PC-9 (cell line): ENCODE measurements at regions of chr1 and their contacts with region 1.

Region 1: DNA sequence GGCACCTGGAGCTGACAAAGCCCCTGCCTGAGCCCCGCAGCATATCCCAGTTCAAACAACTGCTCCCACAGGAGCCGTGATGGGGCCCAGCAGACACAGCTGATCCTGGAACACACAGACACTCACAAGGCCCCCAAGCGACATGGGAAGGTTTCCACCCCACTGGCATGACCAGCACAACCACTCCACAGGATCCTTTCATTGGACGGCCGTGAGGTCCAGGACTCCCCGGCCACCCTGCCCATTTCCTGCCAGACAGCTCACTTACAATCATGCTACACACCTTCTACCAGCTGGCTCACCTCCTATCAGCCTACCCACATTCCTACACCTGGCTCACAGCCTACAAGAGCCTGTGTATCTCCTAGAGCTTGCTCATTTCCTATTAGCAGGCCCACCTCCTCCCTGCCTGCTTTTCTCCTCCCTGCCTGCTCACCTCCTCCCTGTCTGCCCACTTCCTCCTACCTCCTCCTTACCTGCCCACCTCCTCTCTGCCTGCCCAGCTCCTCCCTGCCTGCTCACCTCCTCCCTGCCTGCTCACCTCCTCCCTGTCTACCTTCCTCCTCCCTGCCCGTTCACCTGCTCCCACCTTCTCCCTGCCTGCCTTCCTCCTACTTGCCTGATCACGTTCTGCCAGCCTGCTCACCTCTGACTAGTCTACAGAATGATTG is 73.9 kb downstream of the MATN1 start:
- DNase-seq: peak; percentile 61 to 81
- H3K4me3 ChIP-seq: no peak overlapping the region
- H3K27ac ChIP-seq: peak overlapping the region; percentile 33; the same call in 1 of the 2 replicates
- H3K4me1 ChIP-seq: peaks cover 31% of the 10 kb centered on the region
- H3K27me3 ChIP-seq: no peaks in the 10 kb centered on the region
- CTCF ChIP-seq: no peak

Region 2: DNA sequence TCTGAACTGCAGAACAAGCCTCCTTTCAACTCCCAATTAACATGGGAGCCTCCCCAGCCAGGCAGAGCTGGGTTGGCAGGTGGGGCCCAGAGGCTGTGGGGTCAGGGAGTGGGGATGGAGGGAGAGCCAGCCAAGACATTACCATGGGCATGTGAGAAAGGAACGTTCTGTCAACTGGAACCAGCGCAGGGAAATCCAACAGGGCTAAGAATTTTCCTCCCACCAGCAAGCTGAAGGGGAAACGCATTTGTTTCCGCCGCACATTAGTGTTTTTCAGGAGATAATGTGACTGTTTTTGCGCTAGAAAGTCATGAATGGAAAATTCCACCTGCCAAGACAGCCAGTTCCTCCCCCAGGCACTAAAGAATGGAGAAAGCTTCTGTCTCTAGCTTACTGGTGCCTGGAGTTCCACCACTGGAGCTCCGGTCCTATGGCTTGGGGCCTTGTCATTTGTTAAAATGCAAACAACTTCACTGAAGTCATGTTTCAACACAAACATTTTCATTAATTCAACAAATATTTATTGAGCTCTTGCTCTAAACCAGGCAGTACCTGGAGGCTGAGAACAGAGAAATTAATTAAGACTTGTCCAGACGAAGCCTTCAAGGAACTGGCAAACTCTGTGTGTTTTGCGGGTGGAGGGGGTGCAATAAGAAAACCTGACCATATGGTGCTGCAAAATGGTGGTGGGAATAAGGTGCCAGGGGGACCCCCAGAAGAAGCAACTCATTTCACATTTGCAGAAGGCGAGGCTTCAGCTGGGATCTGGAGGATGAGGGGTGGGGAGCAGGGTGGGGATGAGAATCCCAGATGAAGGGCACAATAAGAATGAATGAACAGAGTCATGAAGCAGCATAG is 231.1 kb before region 1 on chr1:
- CTCF ChIA-PET with region 1: no interaction called
- POLR2A ChIA-PET with region 1: interaction called, 13 read pairs
- intact Hi-C with region 1: no loop called
- DNase-seq: no peak
- H3K4me3 ChIP-seq: no peak overlapping the region
- H3K27ac ChIP-seq: no peak overlapping the region
- H3K4me1 ChIP-seq: no peaks in the 10 kb centered on the region
- H3K27me3 ChIP-seq: 0 out of 2 replicates have a peak, but pooled peaks cover 7% of the 10 kb centered on the region
- CTCF ChIP-seq: no peak

Region 3: DNA sequence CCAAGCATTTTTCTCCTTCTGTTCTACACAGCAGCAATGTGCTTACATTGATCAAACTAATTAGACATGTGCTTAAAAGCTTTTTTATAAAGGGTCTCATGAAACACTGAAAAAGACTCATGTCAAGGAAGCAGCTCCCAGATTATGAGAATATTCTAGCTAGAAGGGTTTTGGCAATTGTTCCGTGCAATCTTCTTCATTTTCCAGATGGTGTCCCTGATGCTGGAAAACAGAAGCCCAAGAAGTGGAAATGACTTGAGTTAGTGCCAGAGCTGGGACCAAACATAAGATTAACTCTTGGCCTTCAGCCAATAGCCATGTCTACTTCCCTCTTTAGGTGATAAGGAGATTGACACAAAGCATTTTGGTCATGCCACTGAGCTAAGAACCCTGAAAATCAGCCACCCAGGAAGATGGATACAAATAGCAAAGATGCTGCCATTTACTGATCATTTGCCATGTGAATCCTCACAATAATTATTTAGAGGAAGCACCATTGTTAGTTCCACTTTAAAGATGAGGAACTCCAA is 36.9 kb before region 1 on chr1:
- CTCF ChIA-PET with region 1: interaction called, 4 read pairs
- POLR2A ChIA-PET with region 1: no interaction called
- intact Hi-C with region 1: loop called (anchors 1 kb)
- DNase-seq: no peak
- H3K4me3 ChIP-seq: no peak overlapping the region
- H3K27ac ChIP-seq: no peak overlapping the region
- H3K4me1 ChIP-seq: peaks cover 21% of the 10 kb centered on the region
- H3K27me3 ChIP-seq: no peaks in the 10 kb centered on the region
- CTCF ChIP-seq: no peak

Region 4: GRCh38 chr1:30672661-30673060 is 23.2 kb after region 1 on chr1:
- CTCF ChIA-PET with region 1: no interaction called
- POLR2A ChIA-PET with region 1: no interaction called
- intact Hi-C with region 1: no loop called
- DNase-seq: no peak
- H3K4me3 ChIP-seq: no peak overlapping the region
- H3K27ac ChIP-seq: no peak overlapping the region
- H3K4me1 ChIP-seq: peaks cover 10% of the 10 kb centered on the region
- H3K27me3 ChIP-seq: no peaks in the 10 kb centered on the region
- CTCF ChIP-seq: no peak

Region 5: DNA sequence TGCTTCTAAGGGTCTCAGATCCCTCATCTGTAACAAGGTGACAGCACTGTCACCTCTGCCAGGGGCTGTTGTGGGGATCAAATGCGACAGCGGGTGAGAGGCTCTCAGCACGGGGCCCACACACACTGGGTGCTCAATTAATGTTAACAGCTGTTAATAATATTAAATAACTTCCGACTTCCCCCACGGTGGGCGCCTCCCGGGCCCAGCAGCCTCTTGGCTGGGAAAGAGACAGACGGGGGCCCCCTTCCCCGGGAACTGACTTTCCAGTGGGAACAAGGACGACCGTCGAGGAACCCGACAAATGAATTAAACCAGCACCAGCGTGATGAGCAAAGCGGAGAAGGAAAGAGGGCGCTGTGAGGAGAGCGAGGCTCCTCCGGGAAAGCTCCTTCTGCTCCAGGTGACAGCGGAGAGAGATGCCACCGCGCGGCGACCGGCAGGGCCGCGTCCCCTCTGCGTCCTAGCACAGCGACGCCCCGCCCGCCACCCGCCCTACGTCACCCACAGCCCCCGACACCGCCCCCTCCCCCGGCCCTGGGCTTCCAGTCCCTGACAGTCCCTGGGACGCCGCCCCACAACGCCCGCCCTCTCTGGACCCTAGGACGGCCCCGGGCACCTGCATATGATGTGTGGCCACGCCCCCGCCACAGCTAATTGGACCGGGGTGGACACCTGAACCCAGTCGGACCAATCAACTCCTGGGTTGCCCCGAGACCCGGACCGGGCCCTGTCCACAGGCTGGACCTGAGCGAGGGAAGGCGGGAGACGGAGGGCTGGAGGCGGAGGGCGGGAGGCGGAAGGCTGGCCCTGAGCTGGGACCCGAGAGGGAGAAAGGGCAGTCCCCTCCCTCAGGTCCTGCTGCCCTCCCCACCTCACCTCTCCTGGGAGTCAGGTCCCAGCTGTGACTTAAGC is 35.7 kb after region 1 on chr1:
- CTCF ChIA-PET with region 1: interaction called, 3 read pairs
- POLR2A ChIA-PET with region 1: no interaction called
- intact Hi-C with region 1: loop called (anchors 2 kb)
- DNase-seq: peak; percentile 77 to 96
- H3K4me3 ChIP-seq: peak overlapping the region; percentile 51; the same call in 1 of the 2 replicates
- H3K27ac ChIP-seq: no peak overlapping the region
- H3K4me1 ChIP-seq: peaks cover 15% of the 10 kb centered on the region
- H3K27me3 ChIP-seq: no peaks in the 10 kb centered on the region
- CTCF ChIP-seq: peak; percentile 42; the same call in 1 of the 2 replicates